Heart left ventricle (tissue), 16 donors: ENCODE measurements at regions of chrX and their contacts with region 1.

Region 1: GRCh38 chrX:68989865-68990606 is 161.2 kb downstream of the EFNB1 start:
- DNase-seq: peak; percentile 41 to 63 (median 48)
- ATAC-seq: peak; percentile 72 to 87 (median 80)
- H3K4me3 ChIP-seq: no peak overlapping the region
- H3K27ac ChIP-seq: peak overlapping the region in 7 of 12 donors; percentile 20 to 57 (median 33)
- H3K4me1 ChIP-seq: peaks cover 0 to 34% (median 12%) of the 10 kb centered on the region in 12 donors
- H3K27me3 ChIP-seq: peaks cover 0 to 11% (median 0%) of the 10 kb centered on the region in 9 donors
- CTCF ChIP-seq: no peak
- POLR2A ChIP-seq: no peak

Region 2: DNA sequence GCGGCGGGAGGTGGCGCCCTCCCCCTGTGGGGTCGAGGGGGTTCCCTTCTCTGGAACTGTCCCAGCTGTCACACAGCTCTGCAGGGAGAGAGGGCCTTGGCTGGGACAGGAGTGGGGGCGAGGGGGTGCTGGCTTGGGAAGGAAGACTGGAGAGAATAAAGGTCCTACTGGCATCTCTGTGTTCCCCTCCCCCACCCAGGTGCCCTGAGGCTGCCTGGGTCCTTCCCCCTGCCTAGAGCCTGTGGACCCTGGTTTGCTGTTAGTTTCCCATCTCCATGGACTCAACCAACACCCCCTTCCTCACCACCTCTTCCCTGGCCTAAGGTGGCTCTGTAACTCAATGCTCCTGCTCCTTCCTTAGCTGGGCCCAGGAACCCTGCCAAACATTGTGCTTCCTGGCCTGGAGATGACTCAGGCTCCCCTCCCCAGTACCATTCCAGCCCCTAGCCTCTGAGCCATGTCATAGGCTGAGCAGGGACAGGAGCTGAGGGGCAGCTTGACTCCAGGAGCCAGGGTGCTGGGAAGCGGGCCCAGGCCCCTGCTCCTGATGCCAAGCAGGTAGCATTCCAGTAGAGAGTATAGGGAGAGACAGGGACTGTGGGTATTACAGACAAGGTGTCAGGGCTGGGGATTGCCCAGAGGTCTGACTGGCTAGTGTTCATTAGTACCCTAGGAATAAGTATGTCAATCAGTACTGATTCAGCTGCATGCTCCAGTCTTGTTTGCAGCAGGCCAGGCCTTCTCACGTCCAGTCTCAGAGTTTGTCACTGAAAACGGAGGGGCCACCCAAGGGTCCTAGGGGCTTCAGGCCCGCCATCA is 60.5 kb before region 1 on chrX:
- intact Hi-C with region 1: loop called in 3 of 10 experiments (anchors 5 to 10 kb)
- DNase-seq: peak; percentile 26 to 77 (median 54)
- ATAC-seq: peak in 3 of 4 donors; percentile 68 to 74 (median 68)
- H3K4me3 ChIP-seq: no peak overlapping the region
- H3K27ac ChIP-seq: peak overlapping the region in 11 of 12 donors; percentile 27 to 87 (median 56)
- H3K4me1 ChIP-seq: peaks cover 0 to 47% (median 14%) of the 10 kb centered on the region in 12 donors
- H3K27me3 ChIP-seq: no peaks in the 10 kb centered on the region
- CTCF ChIP-seq: no peak
- POLR2A ChIP-seq: peak in 1 of 2 donors; percentile 16

Region 3: GRCh38 chrX:68936608-68937007 is 53.4 kb before region 1 on chrX:
- intact Hi-C with region 1: loop called in 4 of 10 experiments (anchors 5 to 10 kb)
- DNase-seq: no peak
- ATAC-seq: peak in 2 of 4 donors; percentile 57 to 63
- H3K4me3 ChIP-seq: no peak overlapping the region
- H3K27ac ChIP-seq: peak overlapping the region in 2 of 12 donors; percentile 19 to 38
- H3K4me1 ChIP-seq: peaks cover 0 to 36% (median 14%) of the 10 kb centered on the region in 12 donors
- H3K27me3 ChIP-seq: peaks cover 0 to 2% (median 0%) of the 10 kb centered on the region in 9 donors
- CTCF ChIP-seq: no peak
- POLR2A ChIP-seq: no peak

Region 4: GRCh38 chrX:68945603-68946228 is 44.3 kb before region 1 on chrX:
- intact Hi-C with region 1: loop called in 1 of 10 experiments (anchors 10 kb)
- DNase-seq: no peak
- ATAC-seq: no peak
- H3K4me3 ChIP-seq: no peak overlapping the region
- H3K27ac ChIP-seq: no peak overlapping the region
- H3K4me1 ChIP-seq: peaks cover 0 to 8% (median 0%) of the 10 kb centered on the region in 12 donors
- H3K27me3 ChIP-seq: peaks cover 0 to 12% (median 0%) of the 10 kb centered on the region in 9 donors
- CTCF ChIP-seq: peak in 4 of 12 donors; percentile 12 to 45 (median 16)
- POLR2A ChIP-seq: no peak